HEK293 (cell line): ENCODE measurements at regions of chr17 and their contacts with region 1.

Region 1: GRCh38 chr17:37084372-37084771 is 135.6 kb downstream of the AATF start:
- H3K4me3 ChIP-seq: no peak overlapping the region
- H3K27ac ChIP-seq: no peak overlapping the region
- H3K4me1 ChIP-seq: no peaks in the 10 kb centered on the region
- CTCF ChIP-seq: no peak

Region 2: DNA sequence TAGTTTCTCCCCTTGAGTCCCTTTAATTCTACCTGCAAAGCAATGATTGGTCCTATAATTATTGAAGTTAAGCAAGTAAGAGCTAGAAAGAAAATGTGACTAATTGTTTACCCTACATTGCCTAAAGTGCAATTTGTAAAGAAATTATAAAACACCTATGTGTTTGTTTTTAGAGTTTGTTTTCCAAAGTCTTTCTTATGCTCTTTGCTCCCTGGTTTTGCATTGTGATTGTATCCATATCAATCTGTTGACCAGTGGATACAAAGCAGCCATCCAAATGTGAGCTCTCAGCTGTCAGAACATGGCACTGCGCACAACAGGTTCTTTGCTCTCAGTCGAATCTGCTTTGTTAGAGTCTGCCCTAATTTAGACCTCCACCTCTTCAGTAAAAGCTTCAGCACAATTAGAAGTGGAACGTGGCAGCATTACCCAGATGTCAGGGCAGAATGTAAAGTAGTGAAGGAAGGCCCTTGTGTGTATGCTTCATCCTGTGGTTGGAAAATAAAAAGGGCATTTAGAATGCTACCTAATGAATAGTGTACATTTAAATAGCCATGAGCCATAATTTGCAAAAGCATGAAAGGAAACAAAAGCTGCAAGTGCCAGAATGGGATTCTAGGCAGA is 65.1 kb before region 1 on chr17:
- CTCF ChIA-PET with region 1: no interaction called
- POLR2A ChIA-PET with region 1: no interaction called
- H3K4me3 ChIP-seq: no peak overlapping the region
- H3K27ac ChIP-seq: no peak overlapping the region
- H3K4me1 ChIP-seq: peaks cover 8% of the 10 kb centered on the region; the same call in 1 of the 2 replicates
- CTCF ChIP-seq: no peak

Region 3: DNA sequence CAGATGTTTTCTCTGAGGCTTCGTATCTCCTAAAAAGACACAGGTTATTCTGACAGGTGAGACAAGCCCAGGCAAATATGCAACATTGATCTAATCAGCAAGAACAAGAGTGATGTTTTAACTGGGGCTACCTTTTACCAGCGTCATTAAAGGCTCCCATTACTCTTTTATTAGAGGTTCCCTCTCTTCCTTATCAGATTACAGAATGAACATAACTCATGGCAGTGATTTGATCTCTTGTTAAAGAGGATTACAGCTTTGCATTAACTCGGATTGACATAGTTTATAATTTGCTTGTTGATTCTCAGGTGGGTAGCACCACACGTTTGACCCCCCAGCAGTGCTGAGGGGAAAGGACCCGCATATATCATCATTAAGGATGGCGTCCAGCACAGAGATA is 45.1 kb before region 1 on chr17:
- CTCF ChIA-PET with region 1: no interaction called
- POLR2A ChIA-PET with region 1: no interaction called
- H3K4me3 ChIP-seq: no peak overlapping the region
- H3K27ac ChIP-seq: no peak overlapping the region
- H3K4me1 ChIP-seq: peaks cover 19% of the 10 kb centered on the region
- CTCF ChIP-seq: no peak

Region 4: GRCh38 chr17:37107406-37108083 is 23.2 kb after region 1 on chr17:
- CTCF ChIA-PET with region 1: no interaction called
- POLR2A ChIA-PET with region 1: no interaction called
- H3K4me3 ChIP-seq: no peak overlapping the region
- H3K27ac ChIP-seq: no peak overlapping the region
- H3K4me1 ChIP-seq: peaks cover 9% of the 10 kb centered on the region
- CTCF ChIP-seq: no peak

Region 5: DNA sequence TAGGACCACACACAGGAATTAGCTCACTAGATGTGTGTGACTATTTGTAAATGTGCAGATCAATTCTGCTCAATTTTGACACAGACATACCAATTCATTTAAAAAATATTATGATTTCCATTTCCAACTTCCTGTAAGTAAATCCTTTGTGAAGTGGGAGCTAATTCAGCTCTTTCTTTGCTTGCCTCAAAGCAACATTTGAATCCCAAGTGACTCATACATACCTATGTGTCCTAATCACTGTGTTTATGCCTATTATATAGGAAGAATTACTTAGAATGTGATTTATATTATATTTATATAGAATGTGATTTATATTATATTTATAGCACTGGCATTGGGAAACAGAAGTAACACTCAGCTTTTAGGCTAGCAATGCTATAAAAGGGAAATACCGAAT is 95.5 kb after region 1 on chr17:
- CTCF ChIA-PET with region 1: no interaction called
- POLR2A ChIA-PET with region 1: interaction called, 14 read pairs
- H3K4me3 ChIP-seq: no peak overlapping the region
- H3K27ac ChIP-seq: no peak overlapping the region
- H3K4me1 ChIP-seq: no peaks in the 10 kb centered on the region
- CTCF ChIP-seq: no peak

Region 6: DNA sequence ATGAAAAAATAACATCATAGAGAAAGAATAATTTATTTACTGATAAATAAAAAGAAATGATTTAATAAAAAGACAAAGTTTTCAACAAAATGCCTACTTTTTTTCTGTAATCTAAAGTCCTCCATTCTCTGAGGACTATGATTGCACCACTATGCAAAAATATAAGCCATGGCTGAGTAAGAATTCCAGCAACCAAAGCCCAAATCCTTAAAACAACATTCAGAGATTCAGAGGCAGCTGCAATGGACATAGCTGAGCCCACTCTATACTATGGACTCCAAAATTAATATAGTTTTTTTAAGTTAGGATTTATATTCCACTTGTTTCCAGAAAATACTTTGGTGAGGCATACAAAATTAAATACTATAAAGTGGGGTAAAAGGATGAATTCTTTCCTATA is 121.9 kb after region 1 on chr17:
- CTCF ChIA-PET with region 1: no interaction called
- POLR2A ChIA-PET with region 1: no interaction called
- H3K4me3 ChIP-seq: no peak overlapping the region
- H3K27ac ChIP-seq: no peak overlapping the region
- H3K4me1 ChIP-seq: no peaks in the 10 kb centered on the region
- CTCF ChIP-seq: no peak